A673 (cell line): ENCODE measurements at regions of chr20 and their contacts with region 1.

Region 1: GRCh38 chr20:38057351-38057972 is 23.9 kb downstream of the RPRD1B start:
- DNase-seq: peak; percentile 78
- H3K4me3 ChIP-seq: no peak overlapping the region
- H3K27ac ChIP-seq: no peak overlapping the region
- H3K4me1 ChIP-seq: no peaks in the 10 kb centered on the region
- H3K27me3 ChIP-seq: no peaks in the 10 kb centered on the region
- CTCF ChIP-seq: peak; percentile 94

Region 2: DNA sequence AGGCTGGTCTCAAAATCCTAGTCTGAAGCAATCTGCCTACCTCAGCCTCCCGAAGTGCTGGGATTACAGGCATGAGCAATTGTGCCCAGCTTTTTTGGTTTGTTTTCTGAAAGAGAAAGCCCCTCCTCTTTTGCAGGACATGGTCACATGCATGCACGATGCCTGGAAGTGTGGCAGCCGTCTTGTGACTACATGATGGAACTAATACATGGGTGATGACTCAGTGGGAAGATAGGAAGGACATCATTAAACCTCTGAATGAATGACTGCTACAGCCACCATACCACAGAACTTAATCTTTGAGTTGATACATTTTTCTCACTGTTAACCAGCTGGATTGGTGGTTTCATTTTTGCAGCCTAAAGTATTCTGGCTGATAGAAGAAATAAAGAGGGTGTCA is 377.0 kb before region 1 on chr20:
- CTCF ChIA-PET with region 1: no interaction called
- POLR2A ChIA-PET with region 1: interaction called, 10 read pairs
- intact Hi-C with region 1: no loop called
- DNase-seq: peak; percentile 23
- H3K4me3 ChIP-seq: no peak overlapping the region
- H3K27ac ChIP-seq: no peak overlapping the region
- H3K4me1 ChIP-seq: no peaks in the 10 kb centered on the region
- H3K27me3 ChIP-seq: peaks cover 12% of the 10 kb centered on the region
- CTCF ChIP-seq: no peak

Region 3: GRCh38 chr20:38043512-38044300 is 13.8 kb before region 1 on chr20:
- CTCF ChIA-PET with region 1: interaction called, 11 read pairs
- POLR2A ChIA-PET with region 1: no interaction called
- intact Hi-C with region 1: no loop called
- DNase-seq: peak; percentile 30
- H3K4me3 ChIP-seq: no peak overlapping the region
- H3K27ac ChIP-seq: no peak overlapping the region
- H3K4me1 ChIP-seq: no peaks in the 10 kb centered on the region
- H3K27me3 ChIP-seq: no peaks in the 10 kb centered on the region
- CTCF ChIP-seq: no peak

Region 4: GRCh38 chr20:38165089-38165989 is 107.9 kb after region 1 on chr20 and contains the start of gene TGM2:
- CTCF ChIA-PET with region 1: interaction called, 5 read pairs
- POLR2A ChIA-PET with region 1: no interaction called
- intact Hi-C with region 1: loop called (anchors 1 kb)
- DNase-seq: peak; percentile 62
- H3K4me3 ChIP-seq: peak within 1 kb of the TSS; percentile 35
- H3K27ac ChIP-seq: no peak within 1 kb of the TSS
- H3K4me1 ChIP-seq: no peaks in the 10 kb centered on the region
- H3K27me3 ChIP-seq: no peaks in the 10 kb centered on the region
- CTCF ChIP-seq: peak; percentile 75
- total RNA-seq, gene TGM2: 0.43 and 0.85 TPM in 2 replicates

Region 5: GRCh38 chr20:38221119-38221589 is 163.7 kb after region 1 on chr20:
- CTCF ChIA-PET with region 1: interaction called, 17 read pairs
- POLR2A ChIA-PET with region 1: no interaction called
- intact Hi-C with region 1: loop called (anchors 1 kb)
- DNase-seq: peak; percentile 77
- H3K4me3 ChIP-seq: no peak overlapping the region
- H3K27ac ChIP-seq: no peak overlapping the region
- H3K4me1 ChIP-seq: no peaks in the 10 kb centered on the region
- H3K27me3 ChIP-seq: no peaks in the 10 kb centered on the region
- CTCF ChIP-seq: peak; percentile 93